ENCODE measurements at regions of chr9 and their contacts with region 1.

Region 1: DNA sequence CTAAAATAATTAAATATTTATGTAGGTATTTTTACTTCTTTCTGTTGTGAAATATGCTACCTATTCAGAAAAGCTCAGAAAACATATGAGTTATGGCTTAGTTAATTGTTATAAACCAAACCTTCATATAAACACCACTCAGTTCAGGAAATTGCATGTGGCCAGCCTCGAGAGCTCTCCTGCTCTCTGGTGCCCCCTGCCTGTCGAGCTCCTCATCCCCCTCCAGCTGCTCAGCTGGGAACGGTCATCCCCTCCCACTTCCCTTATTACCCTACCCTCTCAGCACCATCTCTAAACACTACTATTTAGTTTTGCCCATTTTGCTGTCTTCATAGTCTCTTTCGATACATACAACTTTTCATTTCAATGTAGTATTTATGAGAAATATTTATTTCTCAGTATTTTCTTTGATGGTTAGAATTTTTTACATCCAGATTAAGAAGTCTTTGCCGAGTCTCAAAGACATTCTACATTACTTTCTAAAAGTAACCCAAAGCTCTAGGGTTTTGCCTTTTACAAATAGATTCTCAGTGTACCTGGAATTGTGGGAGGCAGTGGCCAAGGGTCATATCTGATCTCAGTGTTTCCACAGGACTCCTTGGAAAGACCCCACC is 51.2 kb upstream of the SEMA4D start:
- DNase-seq: peak; percentile 74
- ATAC-seq: peak; percentile 100
- H3K4me3 Mint-ChIP-seq: no peak overlapping the region
- H3K27ac Mint-ChIP-seq: peak overlapping the region; percentile 41
- H3K4me1 Mint-ChIP-seq: peaks cover 6% of the 10 kb centered on the region
- H3K27me3 Mint-ChIP-seq: no peaks in the 10 kb centered on the region
- CTCF ChIP-seq: peak; percentile 94

Region 2: GRCh38 chr9:89375191-89375760 is 173.9 kb before region 1 on chr9:
- CTCF ChIA-PET with region 1: interaction called, 52 read pairs
- POLR2A ChIA-PET with region 1: interaction called, 6 read pairs
- intact Hi-C with region 1: loop called (anchors 1 kb)
- DNase-seq: no peak
- ATAC-seq: peak; percentile 89
- H3K4me3 Mint-ChIP-seq: peak overlapping the region; percentile 55
- H3K27ac Mint-ChIP-seq: peak overlapping the region; percentile 89
- H3K4me1 Mint-ChIP-seq: peaks cover 28% of the 10 kb centered on the region
- H3K27me3 Mint-ChIP-seq: no peaks in the 10 kb centered on the region
- CTCF ChIP-seq: no peak

Region 3: GRCh38 chr9:89410641-89411350 is 138.3 kb before region 1 on chr9:
- CTCF ChIA-PET with region 1: interaction called, 14 read pairs
- POLR2A ChIA-PET with region 1: interaction called, 6 read pairs
- intact Hi-C with region 1: no loop called
- DNase-seq: no peak
- ATAC-seq: peak; percentile 20
- H3K4me3 Mint-ChIP-seq: no peak overlapping the region
- H3K27ac Mint-ChIP-seq: peak overlapping the region; percentile 35
- H3K4me1 Mint-ChIP-seq: peaks cover 58% of the 10 kb centered on the region
- H3K27me3 Mint-ChIP-seq: no peaks in the 10 kb centered on the region
- CTCF ChIP-seq: no peak

Region 4: DNA sequence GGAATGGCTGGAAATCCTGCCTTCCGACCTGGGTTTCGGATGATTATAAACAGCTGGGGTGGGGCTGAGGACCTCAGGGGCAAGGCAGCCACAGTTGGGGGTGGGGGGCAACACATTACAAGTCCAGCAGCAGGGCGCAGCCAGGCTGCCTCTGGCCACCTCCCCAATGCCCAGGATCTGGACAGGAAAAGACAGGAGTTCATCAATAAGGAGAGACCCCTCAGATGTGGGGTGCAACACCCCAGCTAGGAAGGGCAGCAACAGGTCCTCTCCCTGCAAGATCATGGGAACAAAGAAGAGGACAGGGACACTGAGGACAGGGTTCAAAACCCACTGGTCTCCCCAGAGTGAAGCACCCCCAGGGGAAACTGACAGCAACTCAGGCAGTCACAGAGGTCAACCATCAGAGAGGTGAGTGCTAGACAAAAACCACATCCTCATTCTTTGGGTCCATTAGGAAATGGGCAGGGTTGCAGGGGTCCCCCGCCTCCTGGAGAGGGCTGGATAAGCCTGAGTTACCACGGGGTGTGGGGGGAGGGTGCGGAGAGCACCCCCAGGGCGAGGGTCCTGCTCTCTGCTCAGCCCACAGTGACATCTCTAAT is 84.7 kb before region 1 on chr9:
- CTCF ChIA-PET with region 1: interaction called, 10 read pairs
- POLR2A ChIA-PET with region 1: interaction called, 4 read pairs
- intact Hi-C with region 1: loop called (anchors 1 kb)
- DNase-seq: peak; percentile 23
- ATAC-seq: peak; percentile 49
- H3K4me3 Mint-ChIP-seq: peak overlapping the region; percentile 72
- H3K27ac Mint-ChIP-seq: peak overlapping the region; percentile 80
- H3K4me1 Mint-ChIP-seq: peaks cover 90% of the 10 kb centered on the region
- H3K27me3 Mint-ChIP-seq: no peaks in the 10 kb centered on the region
- CTCF ChIP-seq: no peak

Region 5: GRCh38 chr9:89497978-89498851 is 50.9 kb before region 1 on chr9 and contains the start of gene SEMA4D:
- CTCF ChIA-PET with region 1: interaction called, 11 read pairs
- POLR2A ChIA-PET with region 1: interaction called, 8 read pairs
- intact Hi-C with region 1: loop called (anchors 2 kb)
- DNase-seq: peak; percentile 29
- ATAC-seq: peak; percentile 49
- H3K4me3 Mint-ChIP-seq: peak within 1 kb of the TSS; percentile 92
- H3K27ac Mint-ChIP-seq: peak within 1 kb of the TSS; percentile 91
- H3K4me1 Mint-ChIP-seq: peaks cover 79% of the 10 kb centered on the region
- H3K27me3 Mint-ChIP-seq: no peaks in the 10 kb centered on the region
- CTCF ChIP-seq: no peak
- total RNA-seq, gene SEMA4D: 68.0 and 79.7 TPM in 2 replicates

Measured in activated B cell treated with CpG ODN at 0.5 μM for 24 hours (primary cell).